ENCODE measurements at regions of chr4 and their contacts with region 1.

Region 1: DNA sequence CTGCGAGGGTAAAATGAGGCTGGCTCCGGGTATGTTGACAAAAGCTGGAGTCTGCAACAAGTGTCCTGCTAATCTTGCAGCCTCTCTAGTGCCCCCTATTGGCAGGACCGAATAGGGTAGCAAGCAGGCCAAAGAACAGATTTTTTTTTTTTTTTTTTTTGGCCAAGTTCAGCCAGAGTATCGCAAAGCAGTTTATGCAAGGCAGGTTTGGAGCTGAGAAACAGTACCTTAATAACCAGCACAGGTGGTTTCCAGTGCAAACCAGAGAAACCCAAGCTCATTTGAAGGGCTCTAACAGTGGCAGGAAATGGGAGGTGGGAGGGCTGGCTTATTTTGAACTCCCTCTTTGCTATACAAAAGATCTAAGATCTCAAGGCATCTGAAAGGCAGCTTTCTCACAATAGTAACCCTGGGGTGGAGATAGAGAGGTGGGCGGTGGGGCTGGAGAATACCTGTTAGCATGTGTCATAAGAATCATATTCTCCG is 38.2 kb upstream of the OCIAD2 start:
- DNase-seq: no peak
- ATAC-seq: no peak
- H3K4me3 ChIP-seq: no peak overlapping the region
- H3K27ac ChIP-seq: no peak overlapping the region
- H3K4me1 ChIP-seq: no peaks in the 10 kb centered on the region
- H3K27me3 ChIP-seq: no peaks in the 10 kb centered on the region
- CTCF ChIP-seq: peak; percentile 71

Region 2: DNA sequence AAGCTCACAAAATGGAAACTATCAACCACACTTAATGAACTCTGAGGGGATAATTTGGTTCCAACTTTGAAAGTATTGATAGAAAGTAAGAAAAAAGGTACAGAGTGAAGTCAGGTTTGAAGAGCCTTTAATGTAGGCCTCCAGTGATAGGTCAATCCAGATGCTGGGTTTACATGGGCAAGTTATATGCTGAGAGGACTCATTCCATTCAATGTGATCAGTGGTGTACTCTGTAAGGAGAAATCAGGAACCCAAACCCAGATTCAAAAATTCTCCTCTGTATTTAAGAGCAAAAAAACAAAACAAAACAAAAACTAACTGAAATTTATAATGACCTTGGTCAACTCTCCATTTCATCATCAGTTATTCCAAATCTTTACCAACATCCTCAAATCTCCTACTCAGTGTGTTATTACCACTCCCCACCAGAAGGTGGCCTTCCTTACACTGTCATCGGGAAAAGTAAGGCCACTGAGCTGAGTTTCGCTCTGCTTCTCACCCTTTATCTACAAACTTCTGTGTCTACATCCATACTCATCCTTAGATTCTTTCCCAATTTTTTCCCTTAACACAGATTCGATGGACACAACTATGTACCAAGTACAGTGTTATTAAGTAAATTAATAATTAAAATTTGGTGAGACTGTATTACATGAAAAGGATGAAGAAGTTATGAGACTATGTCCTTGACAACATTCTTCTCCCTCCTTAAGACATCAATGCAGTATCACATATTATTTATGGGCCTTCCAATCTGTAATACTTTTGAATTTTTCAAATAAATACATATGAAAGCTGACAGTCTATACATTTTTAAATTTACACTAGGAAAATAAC is 366.4 kb before region 1 on chr4:
- CTCF ChIA-PET with region 1: no interaction called
- POLR2A ChIA-PET with region 1: no interaction called
- in situ Hi-C with region 1: no loop called
- intact Hi-C with region 1: no loop called
- DNase-seq: peak; percentile 42
- ATAC-seq: peak; percentile 88
- H3K4me3 ChIP-seq: no peak overlapping the region
- H3K27ac ChIP-seq: no peak overlapping the region
- H3K4me1 ChIP-seq: no peaks in the 10 kb centered on the region
- H3K27me3 ChIP-seq: no peaks in the 10 kb centered on the region
- CTCF ChIP-seq: peak; percentile 74

Region 3: DNA sequence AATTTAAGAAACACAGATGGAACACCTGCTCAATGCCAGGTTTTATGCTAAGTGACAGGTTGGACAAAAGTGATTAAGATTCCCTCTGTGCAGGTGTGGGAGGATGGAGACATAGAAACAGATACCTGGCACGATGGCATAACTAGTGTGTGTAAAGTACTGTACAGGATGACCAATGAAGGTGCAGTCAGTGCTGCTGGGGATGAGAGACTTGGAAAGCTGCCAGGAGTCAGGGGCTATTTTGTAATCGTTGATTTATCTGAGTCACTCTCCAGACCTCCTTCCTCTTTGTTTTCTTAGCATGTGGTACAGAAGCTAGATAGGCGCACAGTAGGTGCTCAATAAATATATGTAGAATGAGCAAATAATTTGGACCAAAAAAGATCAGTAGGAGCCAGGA is 99.5 kb after region 1 on chr4:
- CTCF ChIA-PET with region 1: interaction called, 10 read pairs
- POLR2A ChIA-PET with region 1: no interaction called
- in situ Hi-C with region 1: no loop called
- intact Hi-C with region 1: no loop called
- DNase-seq: no peak
- ATAC-seq: no peak
- H3K4me3 ChIP-seq: no peak overlapping the region
- H3K27ac ChIP-seq: no peak overlapping the region
- H3K4me1 ChIP-seq: no peaks in the 10 kb centered on the region
- H3K27me3 ChIP-seq: no peaks in the 10 kb centered on the region
- CTCF ChIP-seq: no peak